ENCODE measurements at regions of chr2 and their contacts with region 1.

Region 1: DNA sequence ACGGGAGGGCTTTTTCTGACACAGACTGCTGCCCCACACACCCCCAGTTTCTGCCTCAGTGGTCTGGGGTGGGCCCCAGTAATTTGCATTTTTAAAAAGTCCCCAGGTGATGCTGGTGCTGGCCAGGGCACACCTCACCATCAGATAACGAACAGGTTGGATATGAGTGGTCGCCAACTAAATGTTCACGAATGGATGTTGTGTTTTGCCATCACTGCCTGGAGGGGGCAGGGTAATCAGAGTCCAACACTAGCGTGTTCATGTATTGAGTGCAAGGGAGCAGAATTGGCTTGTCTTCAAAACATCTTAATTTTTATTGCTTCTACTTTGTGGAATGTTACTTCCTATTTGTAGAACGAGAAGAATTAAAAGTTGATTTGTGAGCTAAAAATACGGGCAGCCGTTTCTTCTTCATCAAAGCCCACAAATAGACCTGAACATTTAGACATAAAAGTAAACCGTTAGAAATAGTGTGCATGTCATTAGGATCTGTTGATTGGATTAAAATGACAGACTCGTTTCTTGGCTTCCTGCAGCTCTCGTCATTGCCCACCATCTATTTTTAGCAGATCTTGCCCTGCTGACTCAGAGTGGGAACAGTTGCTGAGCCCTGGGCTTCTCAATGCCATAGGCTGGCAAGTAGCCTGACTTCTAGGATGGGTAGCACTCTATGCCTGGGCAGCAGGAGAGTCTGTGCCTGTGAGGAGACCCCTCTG is 45.2 kb downstream of the NCK2 start:
- DNase-seq: peak in 5 of 9 experiments; percentile 56 to 84 (median 70)
- ATAC-seq: peak; percentile 83
- H3K4me3 ChIP-seq: no peak overlapping the region
- H3K4me3 Mint-ChIP-seq: peak overlapping the region; percentile 62
- H3K27ac ChIP-seq: peak overlapping the region; percentile 8 to 86
- H3K27ac Mint-ChIP-seq: peak overlapping the region; percentile 94
- H3K4me1 ChIP-seq: peaks cover 91% of the 10 kb centered on the region
- H3K4me1 Mint-ChIP-seq: peaks cover 93% of the 10 kb centered on the region
- H3K27me3 ChIP-seq: no peaks in the 10 kb centered on the region
- H3K27me3 Mint-ChIP-seq: no peaks in the 10 kb centered on the region
- CTCF ChIP-seq: peak; percentile 39

Region 2: GRCh38 chr2:105802587-105802986 is 12.7 kb after region 1 on chr2:
- CTCF ChIA-PET with region 1: interaction called, 3 read pairs
- POLR2A ChIA-PET with region 1: interaction called, 6 read pairs
- intact Hi-C with region 1: loop called in 1 of 2 experiments (anchors 1 kb)
- DNase-seq: peak in 8 of 9 experiments; percentile 26 to 95 (median 66)
- ATAC-seq: peak; percentile 76
- H3K4me3 ChIP-seq: peak overlapping the region in 1 of 2 experiments; percentile 9
- H3K4me3 Mint-ChIP-seq: peak overlapping the region; percentile 40
- H3K27ac ChIP-seq: peak overlapping the region; percentile 51 to 88
- H3K27ac Mint-ChIP-seq: peak overlapping the region; percentile 96
- H3K4me1 ChIP-seq: peaks cover 94% of the 10 kb centered on the region
- H3K4me1 Mint-ChIP-seq: peaks cover 93% of the 10 kb centered on the region
- H3K27me3 ChIP-seq: no peaks in the 10 kb centered on the region
- H3K27me3 Mint-ChIP-seq: no peaks in the 10 kb centered on the region
- CTCF ChIP-seq: no peak

Measured in CD8-positive, alpha-beta T cell (primary cell).